CD8-positive, alpha-beta T cell (primary cell): ENCODE measurements at regions of chr5 and their contacts with region 1.

Region 1: GRCh38 chr5:43619380-43619779 is 16.4 kb downstream of the NNT start:
- DNase-seq: no peak
- ATAC-seq: no peak
- H3K4me3 ChIP-seq: no peak overlapping the region
- H3K4me3 Mint-ChIP-seq: no peak overlapping the region
- H3K27ac ChIP-seq: no peak overlapping the region
- H3K27ac Mint-ChIP-seq: no peak overlapping the region
- H3K4me1 ChIP-seq: no peaks in the 10 kb centered on the region
- H3K4me1 Mint-ChIP-seq: peaks cover 19% of the 10 kb centered on the region
- H3K27me3 ChIP-seq: no peaks in the 10 kb centered on the region
- H3K27me3 Mint-ChIP-seq: no peaks in the 10 kb centered on the region
- CTCF ChIP-seq: no peak

Region 2: DNA sequence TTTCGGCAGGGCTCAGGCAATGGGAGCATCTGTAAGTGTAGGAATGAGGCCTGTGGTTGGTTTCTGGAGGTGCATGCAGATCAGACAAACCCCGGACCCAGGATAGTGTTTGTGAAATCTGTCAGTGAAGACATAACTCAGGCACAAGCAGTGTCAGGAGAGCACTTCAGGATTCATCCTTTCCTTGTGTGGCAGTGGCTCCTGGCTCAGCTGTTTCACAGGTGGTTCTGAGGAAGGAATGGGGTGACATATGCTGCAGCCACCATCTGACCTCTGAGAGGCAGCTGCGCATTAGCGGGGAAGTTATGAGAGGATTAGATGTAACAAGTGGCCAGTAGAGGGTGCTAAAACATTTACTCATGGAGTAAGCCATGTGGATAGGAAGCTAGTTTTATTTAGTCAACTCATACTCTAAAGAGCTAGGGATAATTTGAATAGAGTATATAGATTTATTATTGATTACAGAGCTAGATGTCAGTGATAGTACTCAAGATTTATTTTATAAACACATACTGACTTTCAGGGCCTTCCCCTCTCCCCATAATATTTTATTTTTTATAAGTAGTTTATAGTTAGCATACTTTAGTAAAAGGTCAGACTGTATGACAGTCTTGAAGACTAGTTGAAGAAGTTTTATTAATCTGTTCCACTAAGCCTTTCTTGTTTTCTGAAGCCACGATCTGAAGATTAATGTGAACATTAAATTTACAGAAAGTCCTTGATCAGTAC is 12.0 kb after region 1 on chr5:
- CTCF ChIA-PET with region 1: interaction called, 20 read pairs
- POLR2A ChIA-PET with region 1: interaction called, 4 read pairs
- intact Hi-C with region 1: no loop called
- DNase-seq: peak in 6 of 9 experiments; percentile 21 to 73 (median 42)
- ATAC-seq: peak; percentile 82
- H3K4me3 ChIP-seq: no peak overlapping the region
- H3K4me3 Mint-ChIP-seq: no peak overlapping the region
- H3K27ac ChIP-seq: no peak overlapping the region
- H3K27ac Mint-ChIP-seq: no peak overlapping the region
- H3K4me1 ChIP-seq: no peaks in the 10 kb centered on the region
- H3K4me1 Mint-ChIP-seq: peaks cover 29% of the 10 kb centered on the region
- H3K27me3 ChIP-seq: no peaks in the 10 kb centered on the region
- H3K27me3 Mint-ChIP-seq: no peaks in the 10 kb centered on the region
- CTCF ChIP-seq: peak; percentile 65

Region 3: GRCh38 chr5:44536650-44537260 is 917.4 kb after region 1 on chr5:
- CTCF ChIA-PET with region 1: no interaction called
- POLR2A ChIA-PET with region 1: no interaction called
- intact Hi-C with region 1: no loop called
- DNase-seq: peak in 1 of 9 experiments; percentile 3
- ATAC-seq: no peak
- H3K4me3 ChIP-seq: no peak overlapping the region
- H3K4me3 Mint-ChIP-seq: no peak overlapping the region
- H3K27ac ChIP-seq: no peak overlapping the region
- H3K27ac Mint-ChIP-seq: no peak overlapping the region
- H3K4me1 ChIP-seq: no peaks in the 10 kb centered on the region
- H3K4me1 Mint-ChIP-seq: no peaks in the 10 kb centered on the region
- H3K27me3 ChIP-seq: no peaks in the 10 kb centered on the region
- H3K27me3 Mint-ChIP-seq: no peaks in the 10 kb centered on the region
- CTCF ChIP-seq: no peak